SK-N-SH (cell line): ENCODE measurements at regions of chr5 and their contacts with region 1.

Region 1: GRCh38 chr5:38922199-38922598 is 76.4 kb downstream of the OSMR start:
- DNase-seq: peak; percentile 64
- H3K4me3 ChIP-seq: no peak overlapping the region; a peak in 1 of 4 replicates
- H3K27ac ChIP-seq: no peak overlapping the region
- H3K4me1 ChIP-seq: peaks cover 0 to 23% of the 10 kb centered on the region in 2 experiments; a peak in 2 of 4 replicates
- H3K27me3 ChIP-seq: no peaks in the 10 kb centered on the region
- CTCF ChIP-seq: peak; percentile 88
- EP300 ChIP-seq: no peak
- RAD21 ChIP-seq: peak; percentile 73

Region 2: GRCh38 chr5:38639377-38640332 is 282.5 kb before region 1 on chr5:
- CTCF ChIA-PET with region 1: no interaction called
- POLR2A ChIA-PET with region 1: no interaction called
- DNase-seq: no peak
- H3K4me3 ChIP-seq: no peak overlapping the region
- H3K27ac ChIP-seq: no peak overlapping the region
- H3K4me1 ChIP-seq: peaks cover 0 to 15% of the 10 kb centered on the region in 2 experiments; a peak in 2 of 4 replicates
- H3K27me3 ChIP-seq: no peaks in the 10 kb centered on the region; the same call in 1 of the 2 replicates
- CTCF ChIP-seq: no peak
- EP300 ChIP-seq: no peak
- RAD21 ChIP-seq: no peak

Region 3: GRCh38 chr5:38892363-38892762 is 29.8 kb before region 1 on chr5:
- CTCF ChIA-PET with region 1: interaction called, 10 read pairs
- POLR2A ChIA-PET with region 1: no interaction called
- DNase-seq: no peak
- H3K4me3 ChIP-seq: no peak overlapping the region
- H3K27ac ChIP-seq: no peak overlapping the region
- H3K4me1 ChIP-seq: no peaks in the 10 kb centered on the region
- H3K27me3 ChIP-seq: no peaks in the 10 kb centered on the region
- CTCF ChIP-seq: no peak
- EP300 ChIP-seq: no peak
- RAD21 ChIP-seq: no peak

Region 4: DNA sequence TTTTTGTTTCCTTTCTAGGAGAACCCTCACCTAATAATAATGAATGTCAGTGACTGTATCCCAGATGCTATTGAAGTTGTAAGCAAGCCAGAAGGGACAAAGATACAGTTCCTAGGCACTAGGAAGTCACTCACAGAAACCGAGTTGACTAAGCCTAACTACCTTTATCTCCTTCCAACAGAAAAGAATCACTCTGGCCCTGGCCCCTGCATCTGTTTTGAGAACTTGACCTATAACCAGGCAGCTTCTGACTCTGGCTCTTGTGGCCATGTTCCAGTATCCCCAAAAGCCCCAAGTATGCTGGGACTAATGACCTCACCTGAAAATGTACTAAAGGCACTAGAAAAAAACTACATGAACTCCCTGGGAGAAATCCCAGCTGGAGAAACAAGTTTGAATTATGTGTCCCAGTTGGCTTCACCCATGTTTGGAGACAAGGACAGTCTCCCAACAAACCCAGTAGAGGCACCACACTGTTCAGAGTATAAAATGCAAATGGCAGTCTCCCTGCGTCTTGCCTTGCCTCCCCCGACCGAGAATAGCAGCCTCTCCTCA is 10.7 kb after region 1 on chr5:
- CTCF ChIA-PET with region 1: interaction called, 13 read pairs
- POLR2A ChIA-PET with region 1: no interaction called
- DNase-seq: no peak
- H3K4me3 ChIP-seq: no peak overlapping the region
- H3K27ac ChIP-seq: no peak overlapping the region
- H3K4me1 ChIP-seq: no peaks in the 10 kb centered on the region
- H3K27me3 ChIP-seq: no peaks in the 10 kb centered on the region
- CTCF ChIP-seq: no peak
- EP300 ChIP-seq: no peak
- RAD21 ChIP-seq: no peak

Region 5: DNA sequence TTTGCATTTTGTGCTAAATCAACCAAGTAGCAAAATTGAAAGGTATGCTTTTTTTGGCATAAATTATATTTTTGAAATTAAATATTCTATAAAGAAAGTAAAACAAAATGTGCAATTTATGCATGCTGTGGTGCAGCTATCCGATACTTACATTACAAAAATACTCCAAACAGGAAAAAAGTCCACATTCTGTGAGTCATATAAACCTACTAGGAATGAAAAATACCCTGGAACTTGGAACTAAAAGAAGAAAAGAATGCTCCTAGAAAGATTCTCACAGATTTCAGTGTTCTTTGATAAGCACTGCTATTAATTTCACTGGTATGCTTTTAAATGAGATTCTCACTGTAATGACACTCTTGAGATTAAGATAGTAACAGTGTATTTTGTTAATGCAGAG is 16.2 kb after region 1 on chr5:
- CTCF ChIA-PET with region 1: interaction called, 13 read pairs
- POLR2A ChIA-PET with region 1: no interaction called
- DNase-seq: no peak
- H3K4me3 ChIP-seq: no peak overlapping the region
- H3K27ac ChIP-seq: peak overlapping the region in 1 of 2 experiments; percentile 50; a peak in 2 of 4 replicates
- H3K4me1 ChIP-seq: peaks cover 0 to 11% of the 10 kb centered on the region in 2 experiments; a peak in 1 of 4 replicates
- H3K27me3 ChIP-seq: no peaks in the 10 kb centered on the region
- CTCF ChIP-seq: no peak
- EP300 ChIP-seq: no peak
- RAD21 ChIP-seq: no peak